Activated CD4-positive, alpha-beta memory T cell treated with anti-CD3 and anti-CD28 coated beads for 36 hours (primary cell): ENCODE measurements at regions of chr10 and their contacts with region 1.

Region 1: GRCh38 chr10:100508691-100509150 is 10.9 kb downstream of the SEC31B start:
- DNase-seq: peak; percentile 56
- H3K4me3 Mint-ChIP-seq: peak overlapping the region; percentile 38
- H3K27ac Mint-ChIP-seq: peak overlapping the region; percentile 88
- H3K4me1 Mint-ChIP-seq: peaks cover 68% of the 10 kb centered on the region
- H3K27me3 Mint-ChIP-seq: no peaks in the 10 kb centered on the region

Region 2: DNA sequence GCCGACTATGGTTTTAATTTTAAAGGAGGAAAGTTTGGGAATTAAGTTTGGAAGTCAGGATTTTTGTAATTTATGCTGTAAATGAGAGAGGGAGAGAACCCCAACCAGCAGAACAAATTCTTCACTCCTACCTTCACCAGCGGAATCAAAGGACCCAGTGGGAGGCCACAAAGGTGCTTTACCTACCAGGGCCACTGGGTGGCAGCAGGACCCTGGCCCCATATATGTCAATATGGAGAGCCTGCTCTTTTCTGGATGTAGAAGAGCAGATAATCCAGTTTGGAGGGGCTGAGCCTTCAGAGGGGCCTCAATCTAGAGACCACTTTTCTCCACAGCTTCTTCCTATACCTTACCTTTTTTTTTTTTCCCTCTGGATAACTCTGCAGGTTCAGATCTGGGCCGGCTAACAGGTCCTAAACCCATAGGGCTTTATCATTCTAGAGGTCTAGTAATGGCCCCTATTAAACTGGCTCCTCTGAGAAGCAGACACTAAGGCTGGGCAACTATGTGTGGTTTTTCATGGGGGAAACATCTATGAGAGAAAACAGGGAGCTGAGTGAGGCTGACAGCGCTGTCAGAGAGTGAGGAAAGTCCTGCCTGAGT is 170.2 kb before region 1 on chr10:
- CTCF ChIA-PET with region 1: interaction called, 137 read pairs
- POLR2A ChIA-PET with region 1: interaction called, 3 read pairs
- intact Hi-C with region 1: loop called (anchors 1 kb)
- DNase-seq: peak; percentile 88
- H3K4me3 Mint-ChIP-seq: no peak overlapping the region
- H3K27ac Mint-ChIP-seq: no peak overlapping the region
- H3K4me1 Mint-ChIP-seq: no peaks in the 10 kb centered on the region
- H3K27me3 Mint-ChIP-seq: peaks cover 4% of the 10 kb centered on the region

Region 3: DNA sequence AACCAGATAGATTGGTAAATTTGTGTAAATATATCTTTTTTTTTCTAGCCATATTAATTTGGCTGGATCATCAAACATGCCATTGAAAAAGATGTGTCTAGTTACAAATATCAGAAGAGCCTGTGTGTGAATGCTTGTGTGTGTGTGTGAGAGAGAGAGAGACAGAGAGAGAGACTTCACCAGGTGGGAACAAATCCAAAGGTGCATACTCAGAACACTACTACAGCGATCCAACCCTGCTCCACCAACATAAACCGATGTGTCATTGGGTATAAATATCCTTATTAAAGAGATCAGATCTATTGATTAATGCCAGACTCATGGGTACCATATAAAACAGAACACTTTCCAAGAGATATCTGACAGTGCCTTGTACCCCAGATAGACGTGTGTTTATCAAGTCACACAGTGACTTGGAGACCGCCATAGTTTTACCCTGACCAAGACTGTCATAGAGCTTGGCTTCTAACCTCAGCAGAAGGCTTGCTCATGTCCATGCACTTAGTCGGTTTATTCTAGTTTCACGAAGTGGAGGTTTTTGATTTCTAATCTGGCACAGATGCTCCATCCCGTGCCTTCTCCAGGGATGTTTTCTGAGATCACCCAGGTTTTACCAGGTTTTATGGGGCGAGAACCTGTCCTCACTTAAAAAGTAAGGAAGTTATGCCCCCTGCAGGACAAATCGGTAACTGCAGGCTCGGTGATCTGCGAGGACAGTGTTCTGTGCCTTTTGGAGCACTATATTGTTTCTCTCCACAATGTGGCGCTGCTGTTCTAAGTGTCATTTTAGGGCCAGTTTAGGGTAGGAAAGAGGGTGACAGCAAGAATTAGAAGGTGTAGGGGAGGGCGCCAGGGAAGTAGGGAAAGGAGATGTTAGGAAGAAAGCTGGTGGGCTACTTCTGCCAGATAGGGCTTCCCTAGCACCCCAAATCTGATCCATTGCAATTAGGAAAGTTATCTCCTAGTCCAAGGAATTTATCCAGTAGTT is 75.2 kb before region 1 on chr10:
- CTCF ChIA-PET with region 1: interaction called, 101 read pairs
- POLR2A ChIA-PET with region 1: no interaction called
- intact Hi-C with region 1: loop called (anchors 1 kb)
- DNase-seq: peak; percentile 97
- H3K4me3 Mint-ChIP-seq: no peak overlapping the region
- H3K27ac Mint-ChIP-seq: peak overlapping the region; percentile 2
- H3K4me1 Mint-ChIP-seq: peaks cover 2% of the 10 kb centered on the region
- H3K27me3 Mint-ChIP-seq: no peaks in the 10 kb centered on the region

Region 4: DNA sequence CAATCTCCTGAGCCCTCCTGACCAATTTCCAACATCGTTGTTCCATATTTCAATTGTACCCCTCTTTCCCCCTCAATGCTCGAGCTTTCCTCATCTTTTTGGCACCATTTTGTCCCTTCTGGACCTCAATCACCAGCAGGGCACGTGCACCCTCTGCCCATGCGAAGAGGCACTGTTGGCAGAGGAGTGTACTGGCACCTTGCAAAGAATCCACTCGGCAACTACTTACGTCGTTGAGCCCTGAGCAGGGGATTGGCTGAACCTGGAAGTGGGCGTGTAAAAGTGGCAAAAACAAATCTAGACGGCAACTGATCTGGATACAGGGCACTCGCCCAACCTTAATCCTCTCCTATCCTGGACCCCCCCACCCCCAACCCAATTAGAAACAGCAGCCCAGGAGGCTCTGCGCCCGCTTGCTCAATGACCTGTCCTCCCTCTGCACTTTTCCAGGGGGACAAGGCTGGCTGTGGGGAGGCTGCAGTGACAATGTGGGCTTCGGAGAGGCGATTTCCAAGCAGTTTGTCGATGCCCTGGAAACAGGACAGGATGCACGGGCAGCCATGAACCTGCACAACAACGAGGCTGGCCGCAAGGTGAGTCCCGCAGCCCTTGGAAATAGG is 27.1 kb before region 1 on chr10:
- CTCF ChIA-PET with region 1: interaction called, 141 read pairs
- POLR2A ChIA-PET with region 1: interaction called, 32 read pairs
- intact Hi-C with region 1: loop called (anchors 1 kb)
- DNase-seq: peak; percentile 97
- H3K4me3 Mint-ChIP-seq: peak overlapping the region; percentile 74
- H3K27ac Mint-ChIP-seq: peak overlapping the region; percentile 6
- H3K4me1 Mint-ChIP-seq: peaks cover 12% of the 10 kb centered on the region
- H3K27me3 Mint-ChIP-seq: peaks cover 14% of the 10 kb centered on the region

Region 5: DNA sequence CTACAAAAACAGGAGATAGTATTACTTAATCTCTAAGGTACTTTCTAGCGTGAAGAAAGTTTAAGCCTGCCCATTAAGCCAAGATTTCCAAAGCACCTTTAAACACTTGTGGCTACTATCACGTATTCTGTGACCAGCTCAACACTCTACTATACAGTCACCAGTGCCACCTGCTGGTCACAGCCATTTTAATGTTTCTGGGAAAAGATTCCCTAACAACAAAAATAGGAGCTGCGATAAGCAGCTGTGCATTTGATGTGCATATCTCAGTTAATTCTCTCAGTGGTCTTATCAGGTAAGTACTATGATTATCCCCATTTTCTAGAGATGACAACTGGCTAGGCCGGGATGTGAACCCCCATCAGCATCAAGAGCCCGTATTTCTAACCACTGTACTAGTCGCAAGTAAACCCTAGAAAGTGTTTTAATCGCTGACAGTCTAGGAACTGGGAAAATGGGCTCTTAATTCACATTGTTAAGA is 10.1 kb after region 1 on chr10:
- CTCF ChIA-PET with region 1: interaction called, 101 read pairs
- POLR2A ChIA-PET with region 1: interaction called, 6 read pairs
- intact Hi-C with region 1: loop called (anchors 1 kb)
- DNase-seq: peak; percentile 76
- H3K4me3 Mint-ChIP-seq: no peak overlapping the region
- H3K27ac Mint-ChIP-seq: peak overlapping the region; percentile 11
- H3K4me1 Mint-ChIP-seq: peaks cover 12% of the 10 kb centered on the region
- H3K27me3 Mint-ChIP-seq: no peaks in the 10 kb centered on the region

Region 6: DNA sequence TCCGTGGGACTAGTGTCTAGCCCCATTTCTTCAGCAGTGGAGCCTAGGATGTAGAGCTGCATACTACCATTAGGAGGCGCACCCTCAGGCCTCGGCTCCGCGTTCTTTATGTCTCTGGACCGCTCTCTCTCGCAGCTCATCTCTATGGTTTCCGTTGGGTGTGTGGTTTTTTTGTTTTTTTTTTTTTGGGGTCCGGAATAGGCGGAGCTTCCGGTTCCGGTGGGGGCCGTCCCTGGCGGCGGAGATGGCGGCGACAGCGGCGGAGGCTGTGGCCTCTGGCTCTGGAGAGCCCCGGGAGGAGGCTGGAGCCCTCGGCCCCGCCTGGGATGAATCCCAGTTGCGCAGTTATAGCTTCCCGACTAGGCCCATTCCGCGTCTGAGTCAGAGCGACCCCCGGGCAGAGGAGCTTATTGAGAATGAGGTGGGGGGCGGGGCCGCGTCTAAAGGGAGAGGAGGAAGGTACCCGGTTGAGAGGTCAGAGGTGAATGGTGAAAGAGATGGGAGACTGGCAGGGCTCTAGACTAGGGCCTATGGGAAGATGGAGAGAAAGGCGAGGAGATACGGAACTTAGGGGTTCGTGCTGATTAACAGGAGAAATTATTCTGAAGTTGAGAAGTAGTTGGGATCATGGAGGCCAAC is 27.1 kb after region 1 on chr10 and contains the start of gene HIF1AN:
- CTCF ChIA-PET with region 1: interaction called, 46 read pairs
- POLR2A ChIA-PET with region 1: interaction called, 4 read pairs
- intact Hi-C with region 1: loop called (anchors 1 kb)
- DNase-seq: peak; percentile 92
- H3K4me3 Mint-ChIP-seq: no peak within 1 kb of the TSS
- H3K27ac Mint-ChIP-seq: no peak within 1 kb of the TSS
- H3K4me1 Mint-ChIP-seq: peaks cover 37% of the 10 kb centered on the region
- H3K27me3 Mint-ChIP-seq: no peaks in the 10 kb centered on the region
- total RNA-seq, gene HIF1AN: 40.6 to 47.4 TPM

Region 7: DNA sequence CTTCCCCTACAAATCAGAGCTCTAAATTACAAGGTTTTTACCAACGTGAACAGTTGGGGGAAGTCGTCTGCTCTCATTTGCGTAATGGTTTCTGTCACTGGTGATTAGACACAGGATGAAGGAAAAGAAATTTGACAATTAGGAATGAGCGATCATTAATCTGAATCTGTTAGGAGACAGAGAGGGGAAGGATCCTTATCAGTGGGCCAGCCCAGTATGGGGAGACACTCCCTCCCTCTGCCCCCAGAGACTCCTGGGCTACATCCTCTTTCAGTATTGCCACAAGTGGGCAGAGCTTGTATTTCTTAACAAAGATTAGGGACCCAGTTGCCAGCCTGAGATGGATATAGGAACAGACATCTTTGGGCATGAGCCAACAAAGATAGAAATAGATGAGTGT is 42.5 kb after region 1 on chr10:
- CTCF ChIA-PET with region 1: no interaction called
- POLR2A ChIA-PET with region 1: no interaction called
- intact Hi-C with region 1: no loop called
- DNase-seq: no peak
- H3K4me3 Mint-ChIP-seq: no peak overlapping the region
- H3K27ac Mint-ChIP-seq: no peak overlapping the region
- H3K4me1 Mint-ChIP-seq: no peaks in the 10 kb centered on the region
- H3K27me3 Mint-ChIP-seq: no peaks in the 10 kb centered on the region